ENCODE measurements at regions of chr3 and their contacts with region 1.

Region 1: GRCh38 chr3:101573449-101574387 is at the start of gene PCNP:
- DNase-seq: peak; percentile 99
- H3K4me3 ChIP-seq: peak within 1 kb of the TSS; percentile 75 to 87
- H3K27ac ChIP-seq: peak within 1 kb of the TSS; percentile 95 to 97
- H3K4me1 ChIP-seq: peaks cover 0 to 43% (median 21%) of the 10 kb centered on the region in 4 donors
- H3K27me3 ChIP-seq: no peaks in the 10 kb centered on the region
- CTCF ChIP-seq: peak; percentile 86 to 92

Region 2: GRCh38 chr3:101512646-101513418 is 60.9 kb before region 1 on chr3 and contains the start of gene SENP7:
- intact Hi-C with region 1: loop called (anchors 5 kb)
- DNase-seq: peak; percentile 85 to 91
- H3K4me3 ChIP-seq: peak within 1 kb of the TSS; percentile 81 to 97
- H3K27ac ChIP-seq: peak within 1 kb of the TSS; percentile 92 to 95
- H3K4me1 ChIP-seq: peaks cover 0 to 10% (median 5%) of the 10 kb centered on the region in 4 donors
- H3K27me3 ChIP-seq: no peaks in the 10 kb centered on the region
- CTCF ChIP-seq: no peak

Region 3: GRCh38 chr3:101676765-101677435 is 103.2 kb after region 1 on chr3 and contains the start of gene ZBTB11:
- intact Hi-C with region 1: loop called (anchors 10 kb)
- DNase-seq: peak; percentile 99 to 100
- H3K4me3 ChIP-seq: peak within 1 kb of the TSS; percentile 67 to 100
- H3K27ac ChIP-seq: peak within 1 kb of the TSS; percentile 89 to 97
- H3K4me1 ChIP-seq: peaks cover 7 to 25% (median 22%) of the 10 kb centered on the region in 4 donors
- H3K27me3 ChIP-seq: no peaks in the 10 kb centered on the region
- CTCF ChIP-seq: peak; percentile 46 to 65

Region 4: GRCh38 chr3:102089904-102090492 is 516.3 kb after region 1 on chr3:
- intact Hi-C with region 1: loop called (anchors 5 kb)
- DNase-seq: no peak
- H3K4me3 ChIP-seq: no peak overlapping the region
- H3K27ac ChIP-seq: peak overlapping the region; percentile 53 to 58
- H3K4me1 ChIP-seq: peaks cover 0 to 30% (median 4%) of the 10 kb centered on the region in 4 donors
- H3K27me3 ChIP-seq: no peaks in the 10 kb centered on the region
- CTCF ChIP-seq: no peak